ENCODE measurements at regions of chr3 and their contacts with region 1.

Region 1: DNA sequence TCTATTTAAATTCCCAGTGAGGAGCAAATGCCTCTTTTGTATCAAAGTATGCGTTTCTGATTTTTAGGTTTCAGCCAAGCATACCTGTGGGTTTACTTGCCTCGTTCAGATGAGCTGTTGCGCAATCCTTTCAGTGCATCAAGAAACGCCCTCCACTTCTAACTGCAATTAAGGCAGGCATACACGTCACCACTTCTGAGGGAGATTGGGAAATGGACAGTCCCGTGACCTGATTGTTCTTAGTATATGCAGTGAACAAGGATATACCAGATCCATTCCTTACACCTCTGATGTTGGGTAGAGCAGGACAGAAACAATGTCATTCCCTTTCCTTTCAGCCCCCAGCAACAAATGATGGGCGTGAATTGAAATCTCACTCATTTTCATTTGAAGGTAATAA is 219.0 kb downstream of the ITPR1 start:
- DNase-seq: no peak
- ATAC-seq: no peak
- H3K4me3 ChIP-seq: no peak overlapping the region
- H3K4me3 Mint-ChIP-seq: no peak overlapping the region
- H3K27ac ChIP-seq: no peak overlapping the region
- H3K27ac Mint-ChIP-seq: no peak overlapping the region
- H3K4me1 ChIP-seq: no peaks in the 10 kb centered on the region
- H3K4me1 Mint-ChIP-seq: peaks cover 0 to 38% (median 0%) of the 10 kb centered on the region in 7 donors
- H3K27me3 ChIP-seq: no peaks in the 10 kb centered on the region
- H3K27me3 Mint-ChIP-seq: no peaks in the 10 kb centered on the region

Region 2: DNA sequence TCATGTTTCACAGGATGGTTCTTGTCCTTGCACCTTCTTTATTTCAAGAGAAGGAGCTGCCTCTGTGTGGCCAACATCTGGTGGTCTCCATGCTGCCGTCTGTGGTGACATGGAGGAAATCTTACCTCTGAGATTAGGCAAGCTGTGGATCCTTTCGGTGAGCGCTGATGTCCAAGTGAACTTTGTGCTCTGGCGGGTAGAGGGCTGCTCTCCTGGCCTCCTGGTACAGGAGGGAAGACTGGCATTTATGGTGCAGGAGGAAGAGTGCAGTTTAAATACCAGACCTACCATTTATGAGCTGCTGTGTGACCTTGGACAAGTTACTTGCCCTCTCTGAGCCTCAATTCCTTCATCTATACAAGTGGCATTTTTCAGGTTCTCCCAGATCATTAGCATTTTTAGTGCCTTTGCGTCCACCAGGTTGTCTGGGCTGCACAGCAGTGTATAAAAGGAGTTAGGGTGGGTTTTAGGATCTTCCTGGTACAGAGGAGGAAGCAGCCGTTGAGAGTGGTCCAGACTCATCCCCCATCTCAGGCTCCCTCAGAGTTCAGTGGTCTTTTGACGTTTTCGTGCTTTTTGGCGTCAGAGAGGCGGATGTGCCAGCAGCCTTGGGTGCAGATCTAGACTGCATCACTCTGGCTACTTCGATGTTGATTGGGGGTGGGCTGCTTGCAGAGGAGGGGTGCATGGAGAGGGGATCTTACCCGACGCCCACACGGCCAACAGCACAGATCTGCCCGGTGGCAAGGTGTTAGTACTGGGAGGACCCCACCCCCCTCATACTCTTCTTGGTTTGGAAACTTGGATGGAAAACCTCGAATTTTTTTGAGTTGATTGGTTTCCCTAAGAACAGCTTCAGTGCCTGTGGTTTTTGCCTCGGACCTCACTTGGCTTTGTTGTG is 56.7 kb before region 1 on chr3:
- CTCF ChIA-PET with region 1: no interaction called
- POLR2A ChIA-PET with region 1: no interaction called
- intact Hi-C with region 1: no loop called
- DNase-seq: no peak
- ATAC-seq: no peak
- H3K4me3 ChIP-seq: no peak overlapping the region
- H3K4me3 Mint-ChIP-seq: no peak overlapping the region
- H3K27ac ChIP-seq: no peak overlapping the region
- H3K27ac Mint-ChIP-seq: no peak overlapping the region
- H3K4me1 ChIP-seq: no peaks in the 10 kb centered on the region
- H3K4me1 Mint-ChIP-seq: no peaks in the 10 kb centered on the region
- H3K27me3 ChIP-seq: no peaks in the 10 kb centered on the region
- H3K27me3 Mint-ChIP-seq: no peaks in the 10 kb centered on the region

Region 3: DNA sequence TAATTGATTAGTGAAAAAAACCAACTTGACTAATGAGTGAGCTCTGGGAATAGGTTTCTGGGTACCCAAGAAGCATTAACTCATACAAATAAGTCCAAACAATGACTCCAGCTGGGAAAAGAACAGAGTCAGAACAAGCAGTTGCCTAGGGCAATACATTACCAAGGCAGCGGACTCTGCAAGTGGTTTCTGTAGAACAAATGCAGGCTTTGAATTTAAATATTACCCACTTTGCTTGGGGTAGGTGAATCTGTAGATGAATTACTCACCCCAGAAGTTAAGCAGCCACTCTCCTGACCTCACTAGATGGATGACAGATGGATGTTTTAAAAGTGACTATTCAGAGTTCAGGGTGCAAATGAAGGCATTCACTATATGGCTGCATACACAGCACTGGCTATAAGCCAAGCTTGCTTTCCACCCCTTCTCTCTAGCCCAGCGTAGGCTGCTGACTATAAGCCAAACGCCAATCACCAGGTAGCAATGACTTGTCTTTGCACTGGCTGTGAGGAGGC is 194.0 kb after region 1 on chr3:
- CTCF ChIA-PET with region 1: interaction called, 3 read pairs
- POLR2A ChIA-PET with region 1: no interaction called
- intact Hi-C with region 1: loop called in 1 of 2 experiments (anchors 10 kb)
- DNase-seq: no peak
- ATAC-seq: no peak
- H3K4me3 ChIP-seq: no peak overlapping the region
- H3K4me3 Mint-ChIP-seq: peak overlapping the region in 2 of 10 donors; percentile 29 to 38
- H3K27ac ChIP-seq: no peak overlapping the region
- H3K27ac Mint-ChIP-seq: peak overlapping the region in 4 of 9 donors; percentile 7 to 75 (median 38)
- H3K4me1 ChIP-seq: peaks cover 14 to 35% of the 10 kb centered on the region in 2 donors
- H3K4me1 Mint-ChIP-seq: peaks cover 33 to 85% (median 58%) of the 10 kb centered on the region in 7 donors
- H3K27me3 ChIP-seq: no peaks in the 10 kb centered on the region
- H3K27me3 Mint-ChIP-seq: no peaks in the 10 kb centered on the region

Region 4: DNA sequence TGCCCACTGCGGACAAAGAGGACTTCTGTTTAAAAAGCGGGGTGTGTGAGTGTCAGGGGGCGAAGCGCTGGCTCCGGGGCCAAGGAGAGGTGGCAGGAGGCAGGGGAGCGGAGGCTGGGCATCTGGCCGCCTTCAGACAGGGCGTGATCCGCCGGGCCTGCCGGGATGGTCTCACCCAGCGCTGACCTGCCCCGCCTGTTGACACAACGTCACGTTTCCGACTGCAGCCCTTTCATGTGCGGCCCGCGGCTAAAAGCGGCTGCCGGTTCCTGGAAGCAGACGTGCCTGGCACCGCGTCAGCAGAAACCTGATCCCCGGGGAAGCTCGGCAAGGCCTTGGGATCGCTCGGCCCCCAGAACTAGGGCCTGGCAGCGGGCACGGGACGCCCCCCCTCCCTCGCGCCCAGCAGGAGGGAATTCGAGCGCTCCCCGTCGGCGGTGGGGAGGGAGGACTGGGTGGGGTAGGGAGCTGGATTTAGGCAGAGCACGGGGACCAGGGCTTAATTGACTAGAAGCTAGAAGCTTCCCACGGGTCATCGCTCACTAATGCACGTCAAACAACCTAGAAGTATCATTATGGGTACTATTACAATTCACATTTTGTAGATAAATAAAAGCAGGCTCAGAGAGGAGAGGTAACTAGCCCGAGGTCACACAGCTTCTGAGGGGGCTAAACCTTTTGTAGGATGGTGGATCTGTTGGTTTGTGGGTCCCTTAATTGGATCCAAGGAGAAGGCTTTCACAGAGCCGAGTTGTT is 274.8 kb after region 1 on chr3:
- CTCF ChIA-PET with region 1: interaction called, 10 read pairs
- POLR2A ChIA-PET with region 1: no interaction called
- intact Hi-C with region 1: no loop called
- DNase-seq: peak; percentile 15 to 74 (median 47)
- ATAC-seq: peak; percentile 79
- H3K4me3 ChIP-seq: peak overlapping the region; percentile 45
- H3K4me3 Mint-ChIP-seq: peak overlapping the region; percentile 74 to 90 (median 84)
- H3K27ac ChIP-seq: peak overlapping the region; percentile 44
- H3K27ac Mint-ChIP-seq: peak overlapping the region; percentile 33 to 90 (median 78)
- H3K4me1 ChIP-seq: peaks cover 26 to 47% of the 10 kb centered on the region in 2 donors
- H3K4me1 Mint-ChIP-seq: peaks cover 16 to 59% (median 35%) of the 10 kb centered on the region in 7 donors
- H3K27me3 ChIP-seq: no peaks in the 10 kb centered on the region
- H3K27me3 Mint-ChIP-seq: no peaks in the 10 kb centered on the region

Region 5: GRCh38 chr3:5036858-5037257 is 324.7 kb after region 1 on chr3:
- CTCF ChIA-PET with region 1: interaction called, 12 read pairs
- POLR2A ChIA-PET with region 1: no interaction called
- intact Hi-C with region 1: no loop called
- DNase-seq: no peak
- ATAC-seq: peak; percentile 40
- H3K4me3 ChIP-seq: no peak overlapping the region
- H3K4me3 Mint-ChIP-seq: no peak overlapping the region
- H3K27ac ChIP-seq: no peak overlapping the region
- H3K27ac Mint-ChIP-seq: peak overlapping the region in 1 of 9 donors; percentile 48
- H3K4me1 ChIP-seq: no peaks in the 10 kb centered on the region
- H3K4me1 Mint-ChIP-seq: peaks cover 0 to 43% (median 5%) of the 10 kb centered on the region in 7 donors
- H3K27me3 ChIP-seq: no peaks in the 10 kb centered on the region
- H3K27me3 Mint-ChIP-seq: no peaks in the 10 kb centered on the region

Region 6: GRCh38 chr3:5063724-5064123 is 351.6 kb after region 1 on chr3:
- CTCF ChIA-PET with region 1: interaction called, 98 read pairs
- POLR2A ChIA-PET with region 1: no interaction called
- intact Hi-C with region 1: no loop called
- DNase-seq: no peak
- ATAC-seq: no peak
- H3K4me3 ChIP-seq: no peak overlapping the region
- H3K4me3 Mint-ChIP-seq: no peak overlapping the region
- H3K27ac ChIP-seq: no peak overlapping the region
- H3K27ac Mint-ChIP-seq: no peak overlapping the region
- H3K4me1 ChIP-seq: no peaks in the 10 kb centered on the region
- H3K4me1 Mint-ChIP-seq: peaks cover 0 to 1% (median 0%) of the 10 kb centered on the region in 7 donors
- H3K27me3 ChIP-seq: no peaks in the 10 kb centered on the region
- H3K27me3 Mint-ChIP-seq: peaks cover 0 to 12% (median 5%) of the 10 kb centered on the region in 5 donors